ENCODE measurements at regions of chr18 and their contacts with region 1.

Region 1: DNA sequence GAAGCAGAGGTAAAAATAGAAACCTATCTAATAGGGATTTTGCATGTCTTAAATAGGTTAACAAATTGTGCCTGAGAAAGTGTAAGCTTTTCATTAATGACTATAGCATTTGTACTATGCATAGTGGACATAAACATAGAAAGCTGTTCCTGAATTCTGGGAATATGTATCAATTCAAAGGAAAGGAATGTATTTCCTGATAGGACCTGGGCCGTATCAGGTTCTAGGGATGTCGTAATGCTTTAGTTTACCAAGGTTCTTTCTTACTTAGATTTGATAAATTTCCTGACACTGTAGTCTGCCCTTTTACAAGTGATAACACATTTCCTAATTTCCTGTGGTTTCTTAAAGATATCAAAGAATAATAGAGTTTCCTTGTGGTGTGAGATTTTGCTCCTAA is 191.3 kb downstream of the CDH7 start:
- DNase-seq: no peak
- H3K4me3 ChIP-seq: no peak overlapping the region
- H3K27ac ChIP-seq: no peak overlapping the region
- H3K4me1 ChIP-seq: no peaks in the 10 kb centered on the region
- H3K27me3 ChIP-seq: no peaks in the 10 kb centered on the region
- CTCF ChIP-seq: no peak

Region 2: GRCh38 chr18:65990944-65991708 is 49.0 kb after region 1 on chr18:
- intact Hi-C with region 1: loop called (anchors 5 kb)
- DNase-seq: no peak
- H3K4me3 ChIP-seq: no peak overlapping the region
- H3K27ac ChIP-seq: no peak overlapping the region
- H3K4me1 ChIP-seq: peaks cover 0 to 16% (median 2%) of the 10 kb centered on the region in 4 donors
- H3K27me3 ChIP-seq: no peaks in the 10 kb centered on the region
- CTCF ChIP-seq: no peak

Measured in tibial artery (tissue), 4 donors.